Testis (tissue), 5 donors: ENCODE measurements at regions of chr5 and their contacts with region 1.

Region 1: GRCh38 chr5:131165119-131165727 is at the start of gene HINT1:
- DNase-seq: peak; percentile 92
- H3K4me3 ChIP-seq: peak within 1 kb of the TSS; percentile 79 to 86
- H3K27ac ChIP-seq: peak within 1 kb of the TSS; percentile 75 to 93
- H3K4me1 ChIP-seq: peaks cover 8% of the 10 kb centered on the region
- H3K27me3 ChIP-seq: no peaks in the 10 kb centered on the region
- CTCF ChIP-seq: peak in 2 of 3 experiments; percentile 0 to 24
- POLR2A ChIP-seq: peak; percentile 31
- total RNA-seq, gene HINT1: 102 to 104 TPM

Region 2: DNA sequence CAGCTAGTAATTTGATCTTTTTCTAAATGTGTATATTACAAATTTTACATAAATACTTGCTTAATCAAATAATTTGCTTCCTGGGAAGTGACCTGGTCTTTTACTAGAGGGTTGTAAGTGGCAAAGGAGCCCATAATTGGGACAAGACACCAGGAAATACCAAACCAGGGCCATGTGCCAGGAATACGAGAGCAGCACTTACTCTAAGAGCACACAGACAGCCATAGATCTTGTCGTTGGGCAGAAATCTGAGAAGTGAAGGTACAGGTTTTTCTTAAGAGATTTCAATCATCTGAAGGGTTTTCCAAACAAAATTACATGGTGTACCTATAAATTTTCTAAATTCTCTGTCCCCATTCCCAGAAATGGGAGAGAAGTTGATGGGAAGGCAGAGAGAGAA is 179.4 kb before region 1 on chr5:
- intact Hi-C with region 1: no loop called
- DNase-seq: no peak
- H3K4me3 ChIP-seq: no peak overlapping the region
- H3K27ac ChIP-seq: no peak overlapping the region
- H3K4me1 ChIP-seq: no peaks in the 10 kb centered on the region
- H3K27me3 ChIP-seq: no peaks in the 10 kb centered on the region
- CTCF ChIP-seq: no peak
- POLR2A ChIP-seq: no peak

Region 3: GRCh38 chr5:131263648-131264450 is 98.6 kb after region 1 on chr5 and contains the start of gene CDC42SE2:
- intact Hi-C with region 1: loop called (anchors 10 kb)
- DNase-seq: peak; percentile 89
- H3K4me3 ChIP-seq: peak within 1 kb of the TSS; percentile 95 to 96
- H3K27ac ChIP-seq: peak within 1 kb of the TSS; percentile 95
- H3K4me1 ChIP-seq: peaks cover 14% of the 10 kb centered on the region
- H3K27me3 ChIP-seq: no peaks in the 10 kb centered on the region
- CTCF ChIP-seq: no peak
- POLR2A ChIP-seq: peak; percentile 61
- total RNA-seq, gene CDC42SE2: 67.1 to 72.8 TPM